ENCODE measurements at regions of chr13 and their contacts with region 1.

Region 1: GRCh38 chr13:111153279-111153976 is 38.3 kb downstream of the ARHGEF7 start:
- DNase-seq: peak; percentile 88
- ATAC-seq: peak; percentile 91
- H3K4me3 ChIP-seq: peak overlapping the region; percentile 86 to 95 (median 93)
- H3K27ac ChIP-seq: peak overlapping the region; percentile 96
- H3K4me1 ChIP-seq: peaks cover 31% of the 10 kb centered on the region
- H3K27me3 ChIP-seq: peaks cover 0 to 4% of the 10 kb centered on the region in 2 experiments; a peak in 2 of 5 replicates
- CTCF ChIP-seq: peak; percentile 66
- EP300 ChIP-seq: no peak
- POLR2A ChIP-seq: peak; percentile 73 to 79
- RAD21 ChIP-seq: peak; percentile 45; the same call in 1 of the 2 replicates

Region 2: GRCh38 chr13:111066544-111066943 is 86.9 kb before region 1 on chr13:
- CTCF ChIA-PET with region 1: no interaction called
- POLR2A ChIA-PET with region 1: no interaction called
- in situ Hi-C with region 1: no loop called
- intact Hi-C with region 1: loop called (anchors 2 kb)
- DNase-seq: no peak
- ATAC-seq: peak; percentile 19; the same call in 2 of the 3 replicates
- H3K4me3 ChIP-seq: no peak overlapping the region
- H3K27ac ChIP-seq: no peak overlapping the region
- H3K4me1 ChIP-seq: 0 out of 2 replicates have a peak, but pooled peaks cover 5% of the 10 kb centered on the region
- H3K27me3 ChIP-seq: peaks cover 3 to 27% of the 10 kb centered on the region in 2 experiments; a peak in 4 of 5 replicates
- CTCF ChIP-seq: no peak
- EP300 ChIP-seq: no peak
- POLR2A ChIP-seq: no peak
- RAD21 ChIP-seq: no peak

Region 3: DNA sequence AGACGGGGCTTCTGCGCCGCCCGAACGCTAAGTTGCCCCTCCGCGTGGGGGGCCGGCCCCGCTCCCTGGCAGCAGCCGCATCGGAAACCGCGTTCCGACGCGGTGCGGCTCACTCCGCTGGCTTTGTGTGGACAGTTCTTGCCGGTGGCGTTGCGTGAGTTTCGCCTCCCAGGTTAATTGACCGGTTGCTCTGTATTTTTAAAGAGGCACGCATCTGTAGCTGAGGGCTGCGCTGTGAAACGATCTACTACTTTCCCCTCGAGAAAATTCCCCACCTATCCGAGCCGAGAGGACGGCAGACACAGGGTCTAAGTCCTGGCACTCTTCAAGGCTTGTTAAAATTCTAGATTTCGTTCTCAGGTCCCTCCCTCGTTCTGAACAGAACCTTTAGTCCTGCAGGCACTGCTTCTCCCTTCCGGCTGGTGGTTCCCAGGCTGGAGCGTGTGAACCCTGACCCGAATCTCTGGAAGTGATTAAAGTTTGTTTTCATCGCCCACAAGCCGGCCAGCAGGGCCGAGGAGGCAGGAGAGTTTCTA is 37.4 kb before region 1 on chr13:
- CTCF ChIA-PET with region 1: no interaction called
- POLR2A ChIA-PET with region 1: no interaction called
- in situ Hi-C with region 1: no loop called
- intact Hi-C with region 1: loop called (anchors 1 kb)
- DNase-seq: peak; percentile 12
- ATAC-seq: peak; percentile 73
- H3K4me3 ChIP-seq: peak overlapping the region; percentile 29 to 62 (median 41); a peak in 4 of 6 replicates
- H3K27ac ChIP-seq: no peak overlapping the region
- H3K4me1 ChIP-seq: peaks cover 5% of the 10 kb centered on the region
- H3K27me3 ChIP-seq: peaks cover 19 to 79% of the 10 kb centered on the region in 2 experiments
- CTCF ChIP-seq: no peak
- EP300 ChIP-seq: no peak
- POLR2A ChIP-seq: no peak
- RAD21 ChIP-seq: no peak

Region 4: DNA sequence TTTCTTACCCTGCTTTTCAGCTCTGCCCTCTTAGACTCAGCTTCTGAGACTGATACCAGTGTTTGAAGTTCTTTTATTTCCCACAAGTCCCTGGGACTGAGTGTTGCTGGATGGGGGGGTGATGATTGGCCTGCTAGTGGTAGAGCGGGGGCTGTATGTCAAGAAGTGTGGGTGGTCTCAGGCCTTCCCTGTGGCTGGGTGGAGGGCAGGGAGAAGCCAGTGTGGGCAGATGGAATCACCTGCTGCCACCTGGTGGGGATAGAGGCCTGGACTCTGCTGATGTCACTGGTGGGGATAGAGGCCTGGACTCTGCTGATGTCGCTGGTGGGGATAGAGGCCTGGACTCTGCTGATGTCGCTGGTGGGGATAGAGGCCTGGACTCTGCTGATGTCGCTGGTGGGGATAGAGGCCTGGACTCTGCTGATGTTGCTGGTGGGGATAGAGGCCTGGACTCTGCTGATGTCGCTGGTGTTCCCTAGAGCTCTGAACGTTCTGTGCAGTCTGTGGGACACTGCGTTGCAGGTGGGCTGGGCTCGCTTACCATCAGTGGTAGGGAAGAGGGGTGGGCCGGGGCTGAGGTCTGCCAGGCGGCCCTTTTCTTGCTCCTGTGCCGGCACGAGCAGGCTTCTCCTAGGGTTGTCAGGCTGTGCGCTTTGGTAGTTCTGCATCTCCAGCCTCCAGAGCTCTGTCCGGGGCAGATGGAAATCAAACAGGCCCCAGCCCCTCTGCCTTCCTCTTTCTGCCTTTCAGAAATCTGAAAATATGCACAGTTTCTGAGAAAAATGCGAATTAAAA is 62.9 kb after region 1 on chr13:
- CTCF ChIA-PET with region 1: interaction called, 3 read pairs
- POLR2A ChIA-PET with region 1: interaction called, 4 read pairs
- in situ Hi-C with region 1: no loop called
- intact Hi-C with region 1: loop called (anchors 2 kb)
- DNase-seq: peak; percentile 29
- ATAC-seq: peak; percentile 97
- H3K4me3 ChIP-seq: no peak overlapping the region
- H3K27ac ChIP-seq: no peak overlapping the region
- H3K4me1 ChIP-seq: no peaks in the 10 kb centered on the region
- H3K27me3 ChIP-seq: no peaks in the 10 kb centered on the region
- CTCF ChIP-seq: peak; percentile 81
- EP300 ChIP-seq: no peak
- POLR2A ChIP-seq: no peak
- RAD21 ChIP-seq: peak; percentile 58

Measured in HepG2 (cell line).